Panc1 (cell line): ENCODE measurements at regions of chr12 and their contacts with region 1.

Region 1: GRCh38 chr12:45148006-45148405 is 67.9 kb upstream of the ANO6 start:
- DNase-seq: no peak
- ATAC-seq: no peak
- H3K4me3 ChIP-seq: no peak overlapping the region
- H3K27ac ChIP-seq: no peak overlapping the region
- H3K4me1 ChIP-seq: no peaks in the 10 kb centered on the region
- H3K27me3 ChIP-seq: no peaks in the 10 kb centered on the region; the same call in 1 of the 2 replicates
- CTCF ChIP-seq: no peak

Region 2: DNA sequence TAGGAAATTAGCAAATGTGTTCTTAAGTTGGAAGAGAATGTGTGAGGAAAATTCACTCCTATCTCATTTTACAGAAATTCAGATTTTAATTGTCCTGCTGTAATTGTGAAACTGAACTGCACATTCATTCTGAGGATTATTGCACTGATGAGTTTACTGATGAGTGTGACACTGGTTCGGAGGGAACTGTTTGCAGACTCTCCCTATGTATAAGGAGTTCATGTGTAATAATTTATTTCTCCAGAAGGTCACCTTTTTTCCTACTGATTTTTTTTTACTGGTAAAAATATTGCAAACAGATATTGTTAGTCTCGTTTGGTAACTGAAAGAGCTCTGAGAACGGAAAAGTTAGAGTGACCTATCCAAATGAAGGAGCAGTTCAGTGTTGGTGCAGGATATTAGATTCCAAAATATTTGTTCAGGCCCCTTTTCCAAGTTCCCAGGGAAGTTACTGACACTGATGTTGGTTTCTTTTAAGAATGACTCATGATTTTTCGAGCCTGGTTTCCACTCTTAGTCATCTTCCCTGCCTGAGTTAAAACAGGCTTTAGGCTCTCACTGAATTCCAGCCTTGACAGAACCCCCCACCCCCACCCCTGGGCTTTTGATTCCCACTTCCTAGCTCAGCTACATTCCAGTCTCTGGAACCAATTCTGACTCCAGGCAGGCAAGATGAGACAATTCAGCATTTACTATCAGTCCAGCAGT is 86.3 kb after region 1 on chr12:
- CTCF ChIA-PET with region 1: no interaction called
- POLR2A ChIA-PET with region 1: no interaction called
- in situ Hi-C with region 1: no loop called
- intact Hi-C with region 1: no loop called
- DNase-seq: peak; percentile 93
- ATAC-seq: peak; percentile 74
- H3K4me3 ChIP-seq: peak overlapping the region in 1 of 2 experiments; percentile 30; a peak in 2 of 4 replicates
- H3K27ac ChIP-seq: peak overlapping the region; percentile 99
- H3K4me1 ChIP-seq: peaks cover 57% of the 10 kb centered on the region
- H3K27me3 ChIP-seq: no peaks in the 10 kb centered on the region
- CTCF ChIP-seq: no peak

Region 3: DNA sequence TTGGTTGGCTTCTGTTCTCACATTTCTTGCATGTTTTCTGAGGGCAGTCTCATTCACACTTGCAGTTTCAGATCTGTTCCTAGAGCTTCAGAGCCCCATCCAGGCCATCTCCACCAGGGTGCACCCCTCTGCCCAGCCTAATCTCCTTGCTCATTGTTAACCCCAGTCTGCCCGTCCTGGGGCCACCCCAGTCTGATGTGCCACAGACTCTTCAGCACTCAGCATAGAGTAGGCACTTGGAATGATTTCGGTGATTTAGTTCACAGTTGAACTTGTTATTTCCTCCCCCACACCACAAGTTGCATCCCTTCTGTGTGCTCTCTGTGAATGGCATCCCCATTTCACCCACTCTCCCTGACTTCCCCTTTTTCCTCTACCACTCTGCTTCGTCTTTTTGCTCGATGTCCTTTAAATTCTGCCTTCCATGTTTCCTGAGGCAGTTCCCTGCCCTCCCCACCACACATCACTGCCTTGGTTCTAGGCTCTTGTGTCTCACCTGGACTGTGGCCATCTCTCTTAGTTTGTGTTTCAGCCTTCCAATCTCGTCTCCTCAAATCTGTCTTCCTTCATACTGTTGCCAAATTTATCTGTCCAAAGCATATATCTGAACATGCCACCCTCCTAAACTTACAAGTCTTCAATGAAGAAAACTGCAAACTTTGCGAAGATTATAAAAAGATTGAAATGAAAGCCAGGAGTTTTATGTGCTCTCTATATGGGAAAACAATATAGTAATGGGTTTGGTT is 109.4 kb after region 1 on chr12:
- CTCF ChIA-PET with region 1: interaction called, 10 read pairs
- POLR2A ChIA-PET with region 1: no interaction called
- in situ Hi-C with region 1: no loop called
- intact Hi-C with region 1: no loop called
- DNase-seq: no peak
- ATAC-seq: no peak
- H3K4me3 ChIP-seq: no peak overlapping the region
- H3K27ac ChIP-seq: peak overlapping the region; percentile 88
- H3K4me1 ChIP-seq: peaks cover 62% of the 10 kb centered on the region
- H3K27me3 ChIP-seq: no peaks in the 10 kb centered on the region
- CTCF ChIP-seq: peak; percentile 5; the same call in 1 of the 2 replicates